Activated CD4-positive, alpha-beta T cell treated with anti-CD3 and anti-CD28 coated beads for 36 hours (primary cell): ENCODE measurements at regions of chr16 and their contacts with region 1.

Region 1: DNA sequence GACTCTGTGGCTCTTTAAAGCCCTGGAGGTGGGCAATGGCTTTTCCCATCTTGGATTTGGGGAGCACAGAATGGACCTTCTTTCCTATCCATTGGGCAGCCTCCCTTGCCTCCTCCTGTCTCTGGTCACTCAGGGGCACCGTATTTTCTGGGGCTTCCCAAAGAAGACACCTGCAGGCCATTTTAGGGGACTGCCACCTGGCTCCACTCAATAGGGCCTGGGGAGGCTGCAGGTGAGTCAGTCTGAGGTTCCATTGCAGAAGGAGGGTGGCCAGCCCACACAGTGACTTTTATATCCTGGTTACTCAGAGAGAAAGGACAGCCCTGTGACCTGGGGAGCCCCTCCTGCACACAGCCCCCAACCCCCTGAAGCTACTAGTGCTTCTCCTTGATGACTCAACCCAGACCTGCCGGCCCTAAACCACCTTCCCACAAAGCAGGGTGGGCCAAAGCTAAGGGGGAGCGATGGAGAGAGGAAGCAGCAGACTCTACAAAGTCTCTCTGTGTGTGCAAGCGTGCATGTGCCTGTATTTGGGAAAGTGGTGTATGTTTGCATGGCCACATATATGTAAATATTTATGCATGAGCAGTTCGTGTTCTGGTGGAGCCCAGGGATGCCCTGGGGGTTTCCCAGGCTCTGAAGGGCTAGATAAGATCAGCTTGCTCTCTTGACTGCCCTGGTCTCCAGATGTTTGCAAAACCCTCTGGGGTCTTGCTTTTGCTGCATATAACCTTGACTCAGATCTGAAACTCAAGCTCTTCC is 5.0 kb downstream of the CX3CL1 start:
- DNase-seq: peak; percentile 70
- ATAC-seq: peak; percentile 90
- H3K4me3 Mint-ChIP-seq: no peak overlapping the region
- H3K27ac Mint-ChIP-seq: no peak overlapping the region
- H3K4me1 Mint-ChIP-seq: peaks cover 16% of the 10 kb centered on the region
- H3K27me3 Mint-ChIP-seq: peaks cover 2% of the 10 kb centered on the region

Region 2: DNA sequence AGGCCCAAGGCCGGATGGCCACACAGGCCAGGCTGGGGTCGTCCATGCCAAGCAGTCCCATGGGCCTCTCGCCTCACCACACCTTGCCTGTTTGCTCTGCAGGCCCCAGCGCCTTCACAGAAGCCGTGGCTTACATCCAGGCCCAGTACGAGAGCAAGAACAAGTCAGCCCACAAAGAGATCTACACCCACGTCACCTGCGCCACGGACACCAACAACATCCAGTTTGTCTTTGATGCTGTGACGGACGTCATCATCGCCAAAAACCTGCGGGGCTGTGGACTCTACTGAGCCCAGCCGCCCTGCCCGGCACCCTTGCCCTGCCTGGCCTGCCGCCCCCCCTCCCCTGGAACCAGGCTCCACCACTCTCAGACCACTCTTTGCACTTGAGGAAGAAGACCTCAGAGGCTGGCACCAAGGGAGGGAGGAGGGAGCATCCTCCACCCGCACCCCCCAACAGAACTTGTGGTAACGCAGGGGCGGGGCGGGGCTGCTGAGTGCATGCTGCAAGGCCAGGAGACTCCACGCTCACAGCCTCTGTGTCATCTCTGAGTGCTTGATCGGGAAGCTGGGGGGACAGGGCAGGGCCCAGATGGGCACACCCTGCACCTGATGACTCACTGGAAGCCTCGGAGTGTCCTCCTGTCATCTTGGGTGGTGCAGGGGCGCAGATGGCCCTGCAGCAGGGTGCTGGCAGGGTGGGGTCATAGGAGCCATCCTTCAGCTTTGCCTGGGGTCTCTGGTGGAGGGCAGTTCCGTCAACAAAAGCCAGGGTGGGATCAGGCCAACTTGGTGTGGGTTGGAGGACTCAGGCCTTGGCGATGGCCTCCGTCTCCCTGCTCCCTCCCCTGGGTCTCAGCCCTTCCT is 1033.4 kb before region 1 on chr16:
- CTCF ChIA-PET with region 1: no interaction called
- POLR2A ChIA-PET with region 1: no interaction called
- intact Hi-C with region 1: no loop called
- DNase-seq: no peak
- ATAC-seq: no peak
- H3K4me3 Mint-ChIP-seq: no peak overlapping the region
- H3K27ac Mint-ChIP-seq: no peak overlapping the region
- H3K4me1 Mint-ChIP-seq: no peaks in the 10 kb centered on the region
- H3K27me3 Mint-ChIP-seq: no peaks in the 10 kb centered on the region

Region 3: GRCh38 chr16:57314161-57314785 is 63.0 kb before region 1 on chr16:
- CTCF ChIA-PET with region 1: no interaction called
- POLR2A ChIA-PET with region 1: no interaction called
- intact Hi-C with region 1: loop called in 1 of 2 experiments (anchors 1 kb)
- DNase-seq: peak; percentile 23
- ATAC-seq: peak; percentile 90
- H3K4me3 Mint-ChIP-seq: no peak overlapping the region
- H3K27ac Mint-ChIP-seq: peak overlapping the region; percentile 33
- H3K4me1 Mint-ChIP-seq: peaks cover 17% of the 10 kb centered on the region
- H3K27me3 Mint-ChIP-seq: no peaks in the 10 kb centered on the region